H1 (cell line): ENCODE measurements at regions of chr7 and their contacts with region 1.

Region 1: DNA sequence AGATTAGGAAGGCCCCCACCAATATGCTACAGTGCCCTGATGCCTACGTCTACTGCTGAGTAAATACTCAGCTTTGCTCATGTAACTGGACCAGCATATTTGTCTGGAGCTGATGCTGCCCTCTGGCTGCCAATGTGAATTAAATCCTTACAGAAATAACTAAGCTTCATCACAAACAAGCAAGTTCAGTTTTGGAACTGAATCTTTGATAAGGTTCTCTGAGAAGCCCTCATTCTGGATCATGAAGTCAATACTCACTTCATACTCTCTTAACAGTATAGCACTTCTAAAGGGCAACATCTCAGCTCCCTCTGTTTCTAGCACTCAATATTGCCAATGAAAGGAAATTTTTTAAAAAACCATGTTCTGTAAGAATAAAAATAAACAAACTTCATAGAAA is 246.7 kb downstream of the ETV1 start:
- DNase-seq: no peak
- H3K4me3 ChIP-seq: no peak overlapping the region
- H3K27ac ChIP-seq: no peak overlapping the region
- H3K4me1 ChIP-seq: no peaks in the 10 kb centered on the region
- H3K27me3 ChIP-seq: no peaks in the 10 kb centered on the region
- CTCF ChIP-seq: peak in 2 of 3 experiments; percentile 46 to 65; a peak in 3 of 4 replicates
- EP300 ChIP-seq: no peak
- POLR2A ChIP-seq: no peak
- RAD21 ChIP-seq: peak; percentile 61 to 73

Region 2: DNA sequence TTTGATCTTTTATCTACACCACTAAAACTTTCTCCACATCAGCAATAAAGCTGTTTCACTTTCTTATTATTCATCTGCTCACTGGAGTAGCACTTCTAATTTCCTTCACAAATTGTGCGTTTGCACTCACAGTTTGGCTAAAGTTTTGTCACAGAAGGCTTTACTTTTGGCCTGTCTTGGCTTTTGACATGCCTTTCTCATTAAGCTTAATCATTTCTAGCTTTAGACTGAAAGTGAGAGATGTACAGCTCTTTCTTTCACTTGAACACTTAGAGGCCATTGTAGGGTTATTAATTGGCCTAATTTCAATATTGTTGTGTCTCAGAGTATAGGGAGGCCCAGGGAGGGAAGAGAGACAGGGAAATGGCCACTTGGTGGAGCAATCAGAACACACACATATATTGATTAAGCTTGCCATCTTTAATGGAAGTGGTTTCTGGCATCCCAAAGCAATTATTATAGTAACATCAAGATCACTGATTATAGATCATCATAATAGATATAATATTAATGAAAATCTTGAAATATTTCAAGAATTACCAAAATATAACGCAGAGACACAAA is 265.8 kb before region 1 on chr7:
- CTCF ChIA-PET with region 1: interaction called, 11 read pairs
- POLR2A ChIA-PET with region 1: no interaction called
- DNase-seq: no peak
- H3K4me3 ChIP-seq: no peak overlapping the region
- H3K27ac ChIP-seq: no peak overlapping the region
- H3K4me1 ChIP-seq: no peaks in the 10 kb centered on the region
- H3K27me3 ChIP-seq: no peaks in the 10 kb centered on the region
- CTCF ChIP-seq: peak in 2 of 3 experiments; percentile 16 to 25; a peak in 2 of 4 replicates
- EP300 ChIP-seq: no peak
- POLR2A ChIP-seq: no peak
- RAD21 ChIP-seq: peak; percentile 52 to 54

Region 3: GRCh38 chr7:13524076-13524475 is 218.7 kb before region 1 on chr7:
- CTCF ChIA-PET with region 1: interaction called, 15 read pairs
- POLR2A ChIA-PET with region 1: no interaction called
- DNase-seq: no peak
- H3K4me3 ChIP-seq: no peak overlapping the region
- H3K27ac ChIP-seq: no peak overlapping the region
- H3K4me1 ChIP-seq: no peaks in the 10 kb centered on the region
- H3K27me3 ChIP-seq: no peaks in the 10 kb centered on the region
- CTCF ChIP-seq: no peak
- EP300 ChIP-seq: no peak
- POLR2A ChIP-seq: no peak
- RAD21 ChIP-seq: no peak

Region 4: DNA sequence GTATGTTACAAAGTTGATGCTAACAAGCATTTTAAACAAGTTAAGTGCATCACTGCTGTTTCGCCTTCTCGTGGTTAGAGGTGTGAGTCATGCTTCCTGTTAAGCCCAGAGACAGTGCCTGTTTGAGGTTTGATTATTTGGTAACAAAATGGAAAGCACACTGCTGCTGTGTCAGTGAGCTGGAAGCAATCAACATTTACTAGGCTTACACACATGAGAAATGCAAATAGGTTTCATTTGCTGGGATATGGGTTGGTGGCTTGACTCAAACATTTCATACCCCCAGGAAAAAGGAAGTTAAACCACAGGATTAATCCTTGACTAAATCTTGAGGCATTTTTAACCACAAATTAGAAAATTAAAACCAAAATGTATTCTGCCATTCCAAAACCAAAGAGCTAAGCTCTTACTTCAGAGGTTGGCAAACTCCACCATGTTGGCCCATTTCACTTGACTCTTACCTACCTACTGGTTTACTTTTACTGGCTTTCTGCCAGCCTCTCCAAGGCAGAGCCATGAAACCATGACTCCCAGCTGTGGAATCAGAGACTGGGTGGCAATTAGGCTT is 107.5 kb after region 1 on chr7:
- CTCF ChIA-PET with region 1: no interaction called
- POLR2A ChIA-PET with region 1: no interaction called
- DNase-seq: no peak
- H3K4me3 ChIP-seq: no peak overlapping the region
- H3K27ac ChIP-seq: no peak overlapping the region
- H3K4me1 ChIP-seq: peaks cover 3 to 9% (median 5%) of the 10 kb centered on the region in 4 experiments; a peak in 5 of 7 replicates
- H3K27me3 ChIP-seq: no peaks in the 10 kb centered on the region
- CTCF ChIP-seq: no peak
- EP300 ChIP-seq: no peak
- POLR2A ChIP-seq: no peak
- RAD21 ChIP-seq: no peak